Natural killer cell (primary cell): ENCODE measurements at regions of chrX and their contacts with region 1.

Region 1: DNA sequence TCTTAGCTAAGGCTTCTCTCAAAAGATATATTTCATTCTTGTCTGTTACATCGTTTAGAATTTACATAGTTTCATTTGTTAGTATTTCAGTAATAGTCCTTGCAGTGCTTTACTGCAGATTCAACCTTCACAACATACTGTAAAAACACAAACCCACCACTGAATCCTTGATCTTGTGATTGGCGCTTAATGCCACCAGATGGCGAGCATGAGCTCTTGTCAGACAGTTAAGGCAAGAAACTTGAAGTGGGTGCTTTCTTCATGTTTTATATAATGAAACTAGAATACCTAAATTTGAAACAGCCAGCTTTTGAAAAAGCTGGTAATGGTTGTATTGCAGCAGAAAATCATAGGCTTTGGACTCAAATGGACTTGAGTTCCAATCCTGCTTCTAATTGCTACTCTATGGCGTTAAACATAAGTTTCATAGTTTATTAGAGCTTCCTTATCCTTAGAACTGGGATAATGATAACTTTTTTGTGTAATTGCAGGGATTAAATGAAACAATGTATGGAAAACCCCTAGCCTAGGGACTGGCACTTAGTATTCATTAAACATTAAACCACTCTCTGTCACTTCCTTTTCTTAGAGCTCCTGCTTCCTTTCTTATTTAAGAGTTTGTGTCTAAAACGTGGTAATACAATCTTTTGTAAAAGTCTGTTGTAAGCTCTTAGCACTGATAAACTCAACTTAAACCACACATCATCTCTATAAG is 95.1 kb downstream of the USP9X start:
- DNase-seq: peak; percentile 26 to 76
- ATAC-seq: peak; percentile 76 to 80 (median 78)
- H3K4me3 ChIP-seq: no peak overlapping the region
- H3K4me3 Mint-ChIP-seq: no peak overlapping the region
- H3K27ac ChIP-seq: peak overlapping the region; percentile 52
- H3K27ac Mint-ChIP-seq: peak overlapping the region; percentile 73 to 78
- H3K4me1 ChIP-seq: peaks cover 2% of the 10 kb centered on the region
- H3K4me1 Mint-ChIP-seq: peaks cover 31 to 34% of the 10 kb centered on the region in 2 donors
- H3K27me3 ChIP-seq: no peaks in the 10 kb centered on the region
- H3K27me3 Mint-ChIP-seq: no peaks in the 10 kb centered on the region
- CTCF ChIP-seq: peak; percentile 47

Region 2: DNA sequence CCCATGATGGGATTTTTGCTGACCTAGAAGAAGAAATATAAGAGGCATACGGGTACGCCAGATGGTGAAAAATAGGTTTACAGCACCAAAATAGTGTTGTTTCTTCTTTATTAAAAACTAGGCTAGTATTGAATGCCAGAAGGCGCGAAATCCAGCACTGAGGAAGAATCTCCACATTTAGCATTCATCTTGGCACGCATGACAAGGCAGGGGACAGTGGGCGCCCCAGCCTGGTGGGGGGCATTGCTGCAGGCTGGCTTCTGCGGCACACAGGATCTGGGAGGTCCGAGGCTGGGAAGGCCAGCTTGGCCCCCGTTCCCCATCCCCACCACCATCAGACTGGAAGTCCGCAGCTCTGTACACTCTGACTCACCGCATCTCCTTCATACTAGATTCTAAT is 77.9 kb after region 1 on chrX:
- intact Hi-C with region 1: loop called (anchors 1 kb)
- DNase-seq: no peak
- ATAC-seq: no peak
- H3K4me3 ChIP-seq: no peak overlapping the region
- H3K4me3 Mint-ChIP-seq: no peak overlapping the region
- H3K27ac ChIP-seq: no peak overlapping the region
- H3K27ac Mint-ChIP-seq: no peak overlapping the region
- H3K4me1 ChIP-seq: peaks cover 7% of the 10 kb centered on the region
- H3K4me1 Mint-ChIP-seq: peaks cover 4 to 5% of the 10 kb centered on the region in 2 donors
- H3K27me3 ChIP-seq: no peaks in the 10 kb centered on the region
- H3K27me3 Mint-ChIP-seq: peaks cover 0 to 8% of the 10 kb centered on the region in 2 donors
- CTCF ChIP-seq: no peak